HEK293 (cell line): ENCODE measurements at regions of chr1 and their contacts with region 1.

Region 1: GRCh38 chr1:109548321-109549267 is at the start of gene GNAI3:
- H3K4me3 ChIP-seq: peak within 1 kb of the TSS; percentile 57
- H3K27ac ChIP-seq: peak within 1 kb of the TSS; percentile 78
- H3K4me1 ChIP-seq: peaks cover 6% of the 10 kb centered on the region; the same call in 1 of the 2 replicates
- CTCF ChIP-seq: peak; percentile 36; the same call in 1 of the 2 replicates

Region 2: DNA sequence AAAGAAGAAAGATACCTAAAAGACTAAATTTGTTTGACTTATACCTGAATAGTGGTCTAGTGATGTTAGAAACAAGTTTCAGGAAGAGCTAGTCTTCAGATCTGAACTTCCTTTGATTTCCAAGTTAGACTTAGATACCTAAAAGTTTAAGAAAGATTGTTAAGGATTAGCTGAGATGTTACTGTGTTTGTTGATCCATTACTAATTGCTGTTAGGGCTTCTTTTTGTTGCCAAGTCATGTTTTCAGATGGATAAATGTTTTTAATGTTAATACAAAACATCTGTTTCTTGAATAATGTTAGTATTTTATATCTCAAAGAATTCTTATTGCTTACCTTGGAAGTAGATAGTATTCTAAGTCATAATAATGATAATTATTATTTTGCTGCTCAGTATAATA is 11.4 kb after region 1 on chr1:
- CTCF ChIA-PET with region 1: interaction called, 7 read pairs
- POLR2A ChIA-PET with region 1: interaction called, 32 read pairs
- H3K4me3 ChIP-seq: no peak overlapping the region
- H3K27ac ChIP-seq: no peak overlapping the region
- H3K4me1 ChIP-seq: peaks cover 8% of the 10 kb centered on the region
- CTCF ChIP-seq: no peak

Region 3: DNA sequence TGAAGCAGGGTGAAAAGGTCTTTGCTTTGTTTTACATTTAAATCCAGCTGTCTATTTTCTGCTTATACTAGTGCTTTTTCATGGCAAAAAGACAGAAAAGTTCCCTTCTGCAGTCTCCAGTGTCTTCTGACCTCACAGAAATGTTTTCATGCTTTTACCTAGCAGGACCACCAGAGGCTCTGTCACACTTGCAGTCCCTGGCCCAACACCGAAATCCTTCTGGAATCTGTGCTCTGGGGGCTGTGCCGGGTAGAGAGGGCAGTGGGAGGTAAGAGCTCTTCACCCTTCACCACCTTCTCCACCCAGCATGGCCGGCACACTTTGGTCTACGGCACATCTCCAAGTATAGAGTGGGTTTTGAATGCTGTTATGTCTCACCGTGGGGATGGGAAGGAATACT is 50.1 kb after region 1 on chr1:
- CTCF ChIA-PET with region 1: interaction called, 6 read pairs
- POLR2A ChIA-PET with region 1: interaction called, 12 read pairs
- H3K4me3 ChIP-seq: no peak overlapping the region
- H3K27ac ChIP-seq: no peak overlapping the region
- H3K4me1 ChIP-seq: no peaks in the 10 kb centered on the region
- CTCF ChIP-seq: 0 out of 2 replicates have a peak, but pooled peaks have one; percentile 11

Region 4: GRCh38 chr1:109630081-109630897 is 81.7 kb after region 1 on chr1:
- CTCF ChIA-PET with region 1: interaction called, 158 read pairs
- POLR2A ChIA-PET with region 1: interaction called, 25 read pairs
- H3K4me3 ChIP-seq: no peak overlapping the region
- H3K27ac ChIP-seq: no peak overlapping the region
- H3K4me1 ChIP-seq: no peaks in the 10 kb centered on the region
- CTCF ChIP-seq: no peak

Region 5: GRCh38 chr1:109649491-109649914 is 100.9 kb after region 1 on chr1:
- CTCF ChIA-PET with region 1: interaction called, 24 read pairs
- POLR2A ChIA-PET with region 1: no interaction called
- H3K4me3 ChIP-seq: no peak overlapping the region
- H3K27ac ChIP-seq: no peak overlapping the region
- H3K4me1 ChIP-seq: no peaks in the 10 kb centered on the region
- CTCF ChIP-seq: no peak